ENCODE measurements at regions of chr15 and their contacts with region 1.

Region 1: GRCh38 chr15:82999905-83000671 is 11.4 kb downstream of the C15orf40 start:
- DNase-seq: peak; percentile 43
- ATAC-seq: peak; percentile 97
- H3K4me3 ChIP-seq: peak overlapping the region; percentile 59; the same call in 1 of the 2 replicates
- H3K27ac ChIP-seq: no peak overlapping the region
- H3K4me1 ChIP-seq: no peaks in the 10 kb centered on the region; the same call in 1 of the 2 replicates
- H3K27me3 ChIP-seq: no peaks in the 10 kb centered on the region
- CTCF ChIP-seq: peak; percentile 47 to 75 (median 59); a peak in 5 of 6 replicates
- EP300 ChIP-seq: no peak
- POLR2A ChIP-seq: no peak
- RAD21 ChIP-seq: peak; percentile 88

Region 2: DNA sequence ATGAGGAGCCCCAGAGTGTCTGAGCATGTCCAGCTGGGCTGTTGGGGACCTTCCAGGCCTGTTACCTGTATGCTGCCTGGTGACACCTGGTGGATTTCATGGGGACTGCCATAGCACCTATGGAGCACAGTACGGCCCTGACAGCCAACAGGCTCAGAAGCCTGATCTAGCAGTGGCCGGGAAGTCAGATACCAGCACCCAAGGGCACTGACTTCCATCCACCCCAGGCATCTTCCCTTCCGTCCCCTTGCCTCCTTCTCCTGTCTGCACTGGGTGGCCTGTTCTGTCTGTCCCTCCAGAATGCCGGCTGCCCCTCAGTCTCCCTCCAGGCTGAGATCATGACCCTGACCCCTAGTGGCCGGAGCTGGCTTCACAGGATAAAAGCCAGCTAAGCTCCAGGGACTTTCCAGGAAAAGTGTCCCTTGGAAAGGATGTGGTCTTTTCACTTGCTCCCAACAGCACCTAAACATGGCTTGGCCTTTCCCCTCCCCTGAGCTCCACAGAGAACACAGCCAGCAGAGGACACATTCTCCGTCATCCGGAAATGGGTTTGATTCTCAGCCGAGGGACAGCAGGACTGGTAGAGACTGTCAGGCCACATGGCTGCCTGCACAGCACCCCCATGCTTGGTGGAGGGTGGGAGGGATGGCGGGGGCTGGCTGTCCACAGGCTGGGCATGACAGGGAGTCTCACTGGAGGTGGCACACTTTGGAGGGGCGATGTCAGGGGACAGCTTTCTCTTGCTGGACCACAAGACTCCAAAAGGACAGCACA is 469.3 kb before region 1 on chr15:
- CTCF ChIA-PET with region 1: interaction called, 34 read pairs
- POLR2A ChIA-PET with region 1: interaction called, 4 read pairs
- RAD21 ChIA-PET with region 1: interaction called, 3 read pairs
- SMC1A ChIA-PET with region 1: interaction called, 10 read pairs
- in situ Hi-C with region 1: no loop called
- intact Hi-C with region 1: loop called (anchors 2 kb)
- DNase-seq: peak; percentile 55
- ATAC-seq: peak; percentile 82
- H3K4me3 ChIP-seq: peak overlapping the region; percentile 5; the same call in 1 of the 2 replicates
- H3K27ac ChIP-seq: peak overlapping the region; percentile 47
- H3K4me1 ChIP-seq: peaks cover 8% of the 10 kb centered on the region
- H3K27me3 ChIP-seq: no peaks in the 10 kb centered on the region
- CTCF ChIP-seq: peak; percentile 62 to 84 (median 80)
- EP300 ChIP-seq: 0 out of 4 replicates have a peak, but pooled peaks of 1 of the 2 experiments have one; percentile 12
- POLR2A ChIP-seq: no peak
- RAD21 ChIP-seq: peak; percentile 28; the same call in 1 of the 2 replicates

Region 3: GRCh38 chr15:82749951-82750830 is 249.9 kb before region 1 on chr15:
- CTCF ChIA-PET with region 1: interaction called, 3 read pairs
- POLR2A ChIA-PET with region 1: no interaction called
- RAD21 ChIA-PET with region 1: interaction called, 11 read pairs
- SMC1A ChIA-PET with region 1: interaction called, 6 read pairs
- in situ Hi-C with region 1: no loop called
- intact Hi-C with region 1: loop called (anchors 10 kb)
- DNase-seq: peak; percentile 57
- ATAC-seq: peak; percentile 96
- H3K4me3 ChIP-seq: peak overlapping the region; percentile 87
- H3K27ac ChIP-seq: peak overlapping the region; percentile 90
- H3K4me1 ChIP-seq: peaks cover 7% of the 10 kb centered on the region; the same call in 1 of the 2 replicates
- H3K27me3 ChIP-seq: no peaks in the 10 kb centered on the region
- CTCF ChIP-seq: no peak
- EP300 ChIP-seq: 0 out of 4 replicates have a peak, but pooled peaks have one; percentile 15 to 17
- POLR2A ChIP-seq: peak; percentile 96
- RAD21 ChIP-seq: no peak

Region 4: GRCh38 chr15:82849556-82850512 is 150.3 kb before region 1 on chr15:
- CTCF ChIA-PET with region 1: interaction called, 43 read pairs
- POLR2A ChIA-PET with region 1: no interaction called
- RAD21 ChIA-PET with region 1: interaction called, 9 read pairs
- SMC1A ChIA-PET with region 1: interaction called, 16 read pairs
- in situ Hi-C with region 1: no loop called
- intact Hi-C with region 1: loop called (anchors 2 kb)
- DNase-seq: no peak
- ATAC-seq: peak; percentile 82
- H3K4me3 ChIP-seq: no peak overlapping the region
- H3K27ac ChIP-seq: no peak overlapping the region
- H3K4me1 ChIP-seq: no peaks in the 10 kb centered on the region
- H3K27me3 ChIP-seq: peaks cover 0 to 5% of the 10 kb centered on the region in 2 experiments; a peak in 1 of 4 replicates
- CTCF ChIP-seq: peak; percentile 64; a peak in 5 of 6 replicates
- EP300 ChIP-seq: no peak
- POLR2A ChIP-seq: no peak
- RAD21 ChIP-seq: peak; percentile 78

Region 5: DNA sequence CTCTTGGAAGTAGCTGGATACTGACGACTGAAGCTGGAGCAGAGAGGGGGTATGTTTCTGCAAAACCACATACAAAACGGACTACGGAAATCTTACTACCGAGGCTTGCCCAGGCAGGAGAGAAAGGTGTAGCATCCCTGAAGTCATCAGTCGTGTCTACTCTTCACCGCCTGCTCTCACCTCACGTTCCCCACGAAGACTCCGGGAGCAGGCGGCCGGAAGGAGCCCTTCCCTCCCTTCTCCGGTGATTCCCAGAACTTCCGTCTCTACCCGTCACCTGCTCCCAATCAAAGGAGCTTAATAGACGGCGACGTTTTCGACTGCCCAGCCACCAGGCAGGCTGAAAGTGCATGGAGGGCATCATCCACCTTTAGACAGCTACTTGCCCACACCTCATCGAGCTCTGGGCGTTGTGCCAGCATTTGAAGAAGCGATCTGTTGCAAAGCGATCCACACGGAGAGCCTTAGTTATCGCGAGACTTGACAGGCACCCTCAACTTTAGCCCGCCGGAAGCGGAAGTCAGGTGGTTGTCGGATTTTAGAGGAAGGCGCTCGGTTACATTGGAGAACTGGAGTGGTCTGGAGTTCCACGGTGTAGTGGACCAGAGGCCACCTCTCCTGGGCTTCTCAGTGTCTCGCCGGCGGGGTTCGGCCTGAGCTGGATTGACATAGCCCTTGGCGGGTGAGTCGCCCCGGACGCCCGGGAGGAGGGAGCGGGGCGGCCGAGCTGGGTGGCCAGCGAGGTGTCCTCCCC is 14.2 kb before region 1 on chr15 and contains the start of gene RAMAC:
- CTCF ChIA-PET with region 1: interaction called, 10 read pairs
- POLR2A ChIA-PET with region 1: interaction called, 3 read pairs
- RAD21 ChIA-PET with region 1: interaction called, 3 read pairs
- SMC1A ChIA-PET with region 1: interaction called, 4 read pairs
- in situ Hi-C with region 1: no loop called
- intact Hi-C with region 1: no loop called
- DNase-seq: peak; percentile 93
- ATAC-seq: peak; percentile 97
- H3K4me3 ChIP-seq: peak within 1 kb of the TSS; percentile 84
- H3K27ac ChIP-seq: peak within 1 kb of the TSS; percentile 71
- H3K4me1 ChIP-seq: peaks cover 8% of the 10 kb centered on the region
- H3K27me3 ChIP-seq: no peaks in the 10 kb centered on the region
- CTCF ChIP-seq: no peak
- EP300 ChIP-seq: no peak
- POLR2A ChIP-seq: peak; percentile 88
- RAD21 ChIP-seq: no peak
- polyA plus RNA-seq, gene RAMAC: 79.3 to 109 TPM

Region 6: DNA sequence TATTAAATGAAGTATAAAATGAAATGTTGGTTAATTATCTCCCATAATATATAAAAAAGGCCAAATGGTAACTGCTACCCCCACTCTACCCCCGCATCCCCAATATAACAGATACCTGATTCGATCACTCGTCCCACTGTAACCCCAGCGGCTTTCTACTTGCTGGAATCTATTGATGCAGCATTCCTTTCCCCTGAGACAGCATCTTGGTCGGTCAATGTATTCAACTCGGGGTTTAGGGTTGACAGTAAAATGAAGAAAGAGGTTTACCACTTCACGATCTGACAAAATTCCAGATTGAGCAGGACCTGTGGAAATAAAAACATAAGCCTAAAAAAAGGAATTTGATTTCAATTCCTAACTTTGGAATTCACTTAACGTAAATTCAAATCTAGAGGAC is 29.9 kb after region 1 on chr15:
- CTCF ChIA-PET with region 1: no interaction called
- POLR2A ChIA-PET with region 1: no interaction called
- RAD21 ChIA-PET with region 1: no interaction called
- SMC1A ChIA-PET with region 1: no interaction called
- in situ Hi-C with region 1: no loop called
- intact Hi-C with region 1: no loop called
- DNase-seq: no peak
- ATAC-seq: no peak
- H3K4me3 ChIP-seq: no peak overlapping the region
- H3K27ac ChIP-seq: no peak overlapping the region
- H3K4me1 ChIP-seq: no peaks in the 10 kb centered on the region
- H3K27me3 ChIP-seq: no peaks in the 10 kb centered on the region
- CTCF ChIP-seq: no peak
- EP300 ChIP-seq: no peak
- POLR2A ChIP-seq: no peak
- RAD21 ChIP-seq: no peak